CD8-positive, alpha-beta T cell (primary cell): ENCODE measurements at regions of chr18 and their contacts with region 1.

Region 1: DNA sequence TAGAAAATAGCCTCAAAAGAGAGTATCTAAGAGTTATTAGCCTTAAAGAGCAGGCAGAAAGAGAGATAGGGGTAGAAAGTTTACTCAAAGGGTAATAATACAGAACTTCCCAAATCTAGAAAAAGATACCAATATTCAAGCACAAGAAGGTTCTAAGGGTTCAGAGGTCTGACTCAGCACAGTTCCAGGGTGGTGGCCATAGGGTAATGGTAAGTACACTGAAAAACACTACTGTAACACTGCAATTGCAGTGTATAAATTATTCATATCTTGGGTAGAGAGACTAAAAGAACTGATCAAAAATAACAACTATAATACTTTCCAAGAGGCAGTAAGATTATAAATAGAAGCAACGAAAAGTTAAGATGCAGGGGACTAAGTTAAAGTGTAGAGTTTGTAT is 115.2 kb downstream of the ROCK1 start:
- DNase-seq: no peak
- ATAC-seq: no peak
- H3K4me3 ChIP-seq: no peak overlapping the region
- H3K4me3 Mint-ChIP-seq: no peak overlapping the region
- H3K27ac ChIP-seq: no peak overlapping the region
- H3K27ac Mint-ChIP-seq: no peak overlapping the region
- H3K4me1 ChIP-seq: no peaks in the 10 kb centered on the region
- H3K4me1 Mint-ChIP-seq: peaks cover 33% of the 10 kb centered on the region
- H3K27me3 ChIP-seq: no peaks in the 10 kb centered on the region
- H3K27me3 Mint-ChIP-seq: no peaks in the 10 kb centered on the region
- CTCF ChIP-seq: no peak

Region 2: GRCh38 chr18:20960735-20961134 is 35.7 kb before region 1 on chr18:
- CTCF ChIA-PET with region 1: no interaction called
- POLR2A ChIA-PET with region 1: no interaction called
- intact Hi-C with region 1: loop called in 1 of 2 experiments (anchors 5 kb)
- DNase-seq: no peak
- ATAC-seq: no peak
- H3K4me3 ChIP-seq: no peak overlapping the region
- H3K4me3 Mint-ChIP-seq: no peak overlapping the region
- H3K27ac ChIP-seq: no peak overlapping the region
- H3K27ac Mint-ChIP-seq: peak overlapping the region; percentile 10
- H3K4me1 ChIP-seq: no peaks in the 10 kb centered on the region
- H3K4me1 Mint-ChIP-seq: peaks cover 1% of the 10 kb centered on the region
- H3K27me3 ChIP-seq: no peaks in the 10 kb centered on the region
- H3K27me3 Mint-ChIP-seq: no peaks in the 10 kb centered on the region
- CTCF ChIP-seq: no peak

Region 3: GRCh38 chr18:21064347-21064746 is 67.9 kb after region 1 on chr18:
- CTCF ChIA-PET with region 1: no interaction called
- POLR2A ChIA-PET with region 1: no interaction called
- intact Hi-C with region 1: no loop called
- DNase-seq: no peak
- ATAC-seq: no peak
- H3K4me3 ChIP-seq: no peak overlapping the region
- H3K4me3 Mint-ChIP-seq: no peak overlapping the region
- H3K27ac ChIP-seq: no peak overlapping the region
- H3K27ac Mint-ChIP-seq: peak overlapping the region; percentile 6
- H3K4me1 ChIP-seq: no peaks in the 10 kb centered on the region
- H3K4me1 Mint-ChIP-seq: peaks cover 53% of the 10 kb centered on the region
- H3K27me3 ChIP-seq: no peaks in the 10 kb centered on the region
- H3K27me3 Mint-ChIP-seq: no peaks in the 10 kb centered on the region
- CTCF ChIP-seq: no peak

Region 4: GRCh38 chr18:21194871-21195771 is 198.7 kb after region 1 on chr18:
- CTCF ChIA-PET with region 1: no interaction called
- POLR2A ChIA-PET with region 1: no interaction called
- intact Hi-C with region 1: no loop called
- DNase-seq: peak in 2 of 9 experiments; percentile 32 to 54
- ATAC-seq: no peak
- H3K4me3 ChIP-seq: no peak overlapping the region
- H3K4me3 Mint-ChIP-seq: no peak overlapping the region
- H3K27ac ChIP-seq: no peak overlapping the region
- H3K27ac Mint-ChIP-seq: no peak overlapping the region
- H3K4me1 ChIP-seq: no peaks in the 10 kb centered on the region
- H3K4me1 Mint-ChIP-seq: no peaks in the 10 kb centered on the region
- H3K27me3 ChIP-seq: no peaks in the 10 kb centered on the region
- H3K27me3 Mint-ChIP-seq: peaks cover 26% of the 10 kb centered on the region
- CTCF ChIP-seq: peak; percentile 84